ENCODE measurements at regions of chr19 and their contacts with region 1.

Region 1: GRCh38 chr19:36528194-36528920 is at the start of gene ZNF260:
- DNase-seq: peak; percentile 91
- H3K4me3 Mint-ChIP-seq: peak within 1 kb of the TSS; percentile 94
- H3K27ac Mint-ChIP-seq: peak within 1 kb of the TSS; percentile 91
- H3K4me1 Mint-ChIP-seq: peaks cover 23% of the 10 kb centered on the region
- H3K27me3 Mint-ChIP-seq: no peaks in the 10 kb centered on the region
- total RNA-seq, gene ZNF260: 9.0 to 9.9 TPM

Region 2: GRCh38 chr19:36449059-36449670 is 79.2 kb before region 1 on chr19:
- CTCF ChIA-PET with region 1: no interaction called
- POLR2A ChIA-PET with region 1: no interaction called
- DNase-seq: no peak
- H3K4me3 Mint-ChIP-seq: no peak overlapping the region
- H3K27ac Mint-ChIP-seq: no peak overlapping the region
- H3K4me1 Mint-ChIP-seq: no peaks in the 10 kb centered on the region
- H3K27me3 Mint-ChIP-seq: no peaks in the 10 kb centered on the region

Region 3: GRCh38 chr19:36460046-36460445 is 68.3 kb before region 1 on chr19:
- CTCF ChIA-PET with region 1: no interaction called
- POLR2A ChIA-PET with region 1: no interaction called
- DNase-seq: no peak
- H3K4me3 Mint-ChIP-seq: no peak overlapping the region
- H3K27ac Mint-ChIP-seq: no peak overlapping the region
- H3K4me1 Mint-ChIP-seq: no peaks in the 10 kb centered on the region
- H3K27me3 Mint-ChIP-seq: no peaks in the 10 kb centered on the region

Region 4: DNA sequence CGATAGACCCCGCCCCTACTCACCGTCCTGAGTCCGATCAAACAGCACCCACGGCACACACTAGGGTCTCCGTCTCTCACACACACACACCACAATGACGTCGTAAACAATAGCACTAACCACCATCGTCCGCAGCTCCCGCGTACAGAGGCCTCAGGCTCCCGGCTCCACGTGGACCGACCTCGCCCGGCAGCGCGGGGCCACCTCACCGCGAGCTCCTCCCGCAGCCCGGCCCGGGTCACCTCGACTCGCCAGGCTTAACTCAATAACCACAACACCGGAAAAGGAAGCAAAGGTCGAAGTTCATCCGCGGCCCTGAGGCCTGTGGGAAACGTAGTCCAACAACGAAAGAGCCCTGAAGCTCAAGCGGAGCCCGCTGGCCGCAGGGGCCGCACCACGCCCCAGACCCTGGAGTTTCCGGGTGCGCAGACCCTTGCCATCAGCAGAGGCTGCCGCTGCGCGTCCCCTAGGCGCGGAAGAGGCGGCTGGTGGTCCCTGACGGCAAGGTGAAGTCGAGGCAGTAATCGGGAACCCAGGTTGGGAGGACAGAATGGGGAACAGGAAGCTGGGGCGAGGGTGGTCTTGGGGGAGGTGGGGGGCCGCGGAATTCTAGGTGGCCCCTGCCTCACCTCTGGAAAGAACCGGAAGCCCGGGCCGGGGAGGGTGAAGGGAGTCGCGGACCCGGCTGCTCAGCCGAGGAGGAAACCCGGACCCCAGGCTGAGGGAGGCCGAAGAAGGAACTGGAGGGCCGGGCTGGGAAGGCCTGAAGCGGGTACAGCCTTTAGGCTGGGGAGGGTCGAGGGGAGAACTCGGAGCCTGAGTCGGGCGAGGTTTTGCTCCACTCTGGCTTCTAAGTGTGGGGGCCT is 44.9 kb after region 1 on chr19 and contains the start of gene ZNF529:
- CTCF ChIA-PET with region 1: interaction called, 6 read pairs
- POLR2A ChIA-PET with region 1: interaction called, 30 read pairs
- DNase-seq: peak; percentile 90
- H3K4me3 Mint-ChIP-seq: peak within 1 kb of the TSS; percentile 87
- H3K27ac Mint-ChIP-seq: peak within 1 kb of the TSS; percentile 90
- H3K4me1 Mint-ChIP-seq: peaks cover 33% of the 10 kb centered on the region
- H3K27me3 Mint-ChIP-seq: no peaks in the 10 kb centered on the region
- total RNA-seq, gene ZNF529: 11.1 to 14.6 TPM

Region 5: DNA sequence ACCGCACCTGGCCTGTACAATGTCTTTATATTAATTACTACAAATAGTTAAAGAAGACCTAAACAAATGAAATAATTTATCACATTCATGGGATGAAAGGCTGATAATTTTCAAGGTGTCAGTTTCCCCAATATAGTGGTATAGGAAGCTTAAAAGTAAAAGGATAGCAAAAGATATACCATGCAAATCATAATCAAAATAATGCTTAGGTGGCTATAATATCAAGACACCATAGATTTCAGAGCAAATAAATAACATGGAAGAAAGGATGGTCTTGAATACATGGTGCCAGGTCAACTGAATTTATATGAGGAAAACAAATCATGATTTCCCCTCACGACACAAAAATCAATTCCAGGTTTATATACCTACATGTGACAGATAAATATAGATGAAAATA is 305.1 kb after region 1 on chr19:
- CTCF ChIA-PET with region 1: no interaction called
- POLR2A ChIA-PET with region 1: no interaction called
- DNase-seq: no peak
- H3K4me3 Mint-ChIP-seq: no peak overlapping the region
- H3K27ac Mint-ChIP-seq: no peak overlapping the region
- H3K4me1 Mint-ChIP-seq: peaks cover 2% of the 10 kb centered on the region
- H3K27me3 Mint-ChIP-seq: no peaks in the 10 kb centered on the region

Measured in activated CD4-positive, alpha-beta memory T cell treated with anti-CD3 and anti-CD28 coated beads, Interleukin-2, amount 10 ng/mL, durations not matched to agents 7 days and 5 days (primary cell).